CD8-positive, alpha-beta T cell (primary cell): ENCODE measurements at regions of chr3 and their contacts with region 1.

Region 1: DNA sequence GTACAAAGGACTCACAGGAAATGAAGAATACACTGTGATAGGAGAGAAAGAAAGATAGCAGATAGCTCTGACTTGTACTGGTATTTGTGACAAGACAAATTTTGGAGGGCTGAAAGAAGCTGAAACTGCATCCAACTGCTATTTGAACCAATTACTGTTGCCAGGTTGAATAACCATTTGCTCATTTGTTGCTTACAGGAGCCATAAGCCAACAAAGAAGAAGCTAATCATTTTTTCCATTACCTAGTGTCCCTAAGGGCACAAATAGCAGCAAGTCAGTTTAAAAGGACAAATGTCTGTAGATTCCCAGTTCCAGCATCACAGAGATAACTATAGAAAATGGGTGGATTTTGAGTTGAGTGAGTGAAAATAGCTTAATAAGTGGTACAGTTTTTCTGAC is 376.9 kb upstream of the ARPP21 start:
- DNase-seq: no peak
- ATAC-seq: no peak
- H3K4me3 ChIP-seq: no peak overlapping the region
- H3K4me3 Mint-ChIP-seq: no peak overlapping the region
- H3K27ac ChIP-seq: no peak overlapping the region
- H3K27ac Mint-ChIP-seq: no peak overlapping the region
- H3K4me1 ChIP-seq: no peaks in the 10 kb centered on the region
- H3K4me1 Mint-ChIP-seq: no peaks in the 10 kb centered on the region
- H3K27me3 ChIP-seq: no peaks in the 10 kb centered on the region
- H3K27me3 Mint-ChIP-seq: no peaks in the 10 kb centered on the region
- CTCF ChIP-seq: no peak

Region 2: DNA sequence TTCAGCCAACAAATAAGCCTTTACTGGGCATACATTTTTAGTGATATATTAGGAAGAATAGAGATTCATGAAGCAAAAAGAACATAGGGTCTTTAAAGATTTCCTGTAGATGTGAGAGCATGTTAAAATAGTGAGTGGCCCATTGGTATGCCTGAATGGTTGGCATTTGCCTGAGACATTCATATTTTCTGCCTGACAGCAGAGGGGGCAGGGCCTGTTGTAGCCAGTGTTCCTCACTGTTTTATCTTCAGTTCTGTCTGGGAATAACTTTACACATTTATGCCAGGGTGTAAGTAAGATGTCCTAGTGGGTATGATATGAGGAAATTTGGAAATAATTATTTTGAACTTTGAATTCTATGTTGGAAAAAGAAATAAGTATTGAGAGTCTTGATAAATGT is 327.7 kb before region 1 on chr3:
- CTCF ChIA-PET with region 1: no interaction called
- POLR2A ChIA-PET with region 1: no interaction called
- intact Hi-C with region 1: no loop called
- DNase-seq: no peak
- ATAC-seq: no peak
- H3K4me3 ChIP-seq: no peak overlapping the region
- H3K4me3 Mint-ChIP-seq: no peak overlapping the region
- H3K27ac ChIP-seq: no peak overlapping the region
- H3K27ac Mint-ChIP-seq: no peak overlapping the region
- H3K4me1 ChIP-seq: no peaks in the 10 kb centered on the region
- H3K4me1 Mint-ChIP-seq: no peaks in the 10 kb centered on the region
- H3K27me3 ChIP-seq: no peaks in the 10 kb centered on the region
- H3K27me3 Mint-ChIP-seq: no peaks in the 10 kb centered on the region
- CTCF ChIP-seq: no peak

Region 3: GRCh38 chr3:35120026-35120425 is 142.4 kb before region 1 on chr3:
- CTCF ChIA-PET with region 1: no interaction called
- POLR2A ChIA-PET with region 1: no interaction called
- intact Hi-C with region 1: no loop called
- DNase-seq: no peak
- ATAC-seq: no peak
- H3K4me3 ChIP-seq: no peak overlapping the region
- H3K4me3 Mint-ChIP-seq: no peak overlapping the region
- H3K27ac ChIP-seq: no peak overlapping the region
- H3K27ac Mint-ChIP-seq: no peak overlapping the region
- H3K4me1 ChIP-seq: no peaks in the 10 kb centered on the region
- H3K4me1 Mint-ChIP-seq: no peaks in the 10 kb centered on the region
- H3K27me3 ChIP-seq: no peaks in the 10 kb centered on the region
- H3K27me3 Mint-ChIP-seq: no peaks in the 10 kb centered on the region
- CTCF ChIP-seq: no peak

Region 4: GRCh38 chr3:35596335-35596995 is 334.1 kb after region 1 on chr3:
- CTCF ChIA-PET with region 1: no interaction called
- POLR2A ChIA-PET with region 1: no interaction called
- intact Hi-C with region 1: loop called in 1 of 2 experiments (anchors 5 kb)
- DNase-seq: no peak
- ATAC-seq: no peak
- H3K4me3 ChIP-seq: no peak overlapping the region
- H3K4me3 Mint-ChIP-seq: no peak overlapping the region
- H3K27ac ChIP-seq: no peak overlapping the region
- H3K27ac Mint-ChIP-seq: no peak overlapping the region
- H3K4me1 ChIP-seq: no peaks in the 10 kb centered on the region
- H3K4me1 Mint-ChIP-seq: no peaks in the 10 kb centered on the region
- H3K27me3 ChIP-seq: no peaks in the 10 kb centered on the region
- H3K27me3 Mint-ChIP-seq: no peaks in the 10 kb centered on the region
- CTCF ChIP-seq: no peak